Mammary epithelial cell (primary cell): ENCODE measurements at regions of chr22 and their contacts with region 1.

Region 1: DNA sequence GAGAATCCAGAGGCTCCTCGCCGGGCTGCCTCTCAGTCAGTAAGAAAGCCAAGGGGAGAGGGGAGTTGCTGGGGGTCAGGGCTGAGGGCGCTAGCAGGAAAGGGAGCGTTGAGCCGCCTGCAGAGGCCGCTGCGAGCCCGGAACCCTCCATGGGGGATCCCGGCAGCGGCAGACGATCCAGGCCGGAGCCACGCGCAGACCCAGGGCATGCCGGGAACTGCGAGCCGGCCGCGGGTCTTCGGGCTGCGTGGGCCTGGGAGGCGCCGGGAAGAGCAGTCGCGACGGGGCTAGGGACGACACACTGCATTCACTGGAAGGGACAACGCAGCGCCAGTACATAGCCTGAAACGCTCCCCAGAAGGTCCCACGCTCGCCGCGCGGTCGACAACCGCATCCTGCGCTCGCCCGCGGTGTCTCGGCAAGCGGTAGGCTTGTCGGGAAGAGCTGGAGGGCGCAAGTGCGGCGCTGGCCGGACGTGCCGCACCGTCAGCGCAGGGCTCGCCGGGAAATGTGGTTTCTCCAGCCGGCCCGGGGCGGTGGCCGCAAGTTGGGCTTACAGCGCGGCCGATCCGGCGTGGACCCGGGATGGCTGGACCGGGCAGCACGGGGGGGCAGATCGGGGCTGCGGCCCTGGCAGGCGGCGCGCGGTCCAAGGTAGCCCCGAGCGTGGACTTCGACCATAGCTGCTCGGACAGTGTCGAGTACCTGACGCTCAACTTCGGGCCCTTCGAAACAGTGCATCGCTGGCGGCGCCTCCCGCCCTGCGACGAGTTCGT is at the start of gene LZTR1:
- DNase-seq: peak; percentile 83
- H3K4me3 ChIP-seq: peak within 1 kb of the TSS; percentile 63 to 94 (median 83)
- H3K27ac ChIP-seq: peak within 1 kb of the TSS; percentile 78
- H3K4me1 ChIP-seq: peaks cover 33% of the 10 kb centered on the region
- H3K27me3 ChIP-seq: no peaks in the 10 kb centered on the region
- CTCF ChIP-seq: peak; percentile 32 to 59
- total RNA-seq, gene LZTR1: 52.8 to 59.4 TPM

Region 2: GRCh38 chr22:20495861-20496681 is 485.9 kb before region 1 on chr22:
- CTCF ChIA-PET with region 1: no interaction called
- dilution Hi-C with region 1: no loop called
- in situ Hi-C with region 1: no loop called
- intact Hi-C with region 1: no loop called
- DNase-seq: peak; percentile 92
- H3K4me3 ChIP-seq: peak overlapping the region; percentile 49 to 60 (median 54)
- H3K27ac ChIP-seq: peak overlapping the region; percentile 77
- H3K4me1 ChIP-seq: peaks cover 16% of the 10 kb centered on the region
- H3K27me3 ChIP-seq: no peaks in the 10 kb centered on the region
- CTCF ChIP-seq: peak; percentile 81 to 86

Region 3: GRCh38 chr22:20803696-20804324 is 178.2 kb before region 1 on chr22:
- CTCF ChIA-PET with region 1: no interaction called
- dilution Hi-C with region 1: no loop called
- in situ Hi-C with region 1: no loop called
- intact Hi-C with region 1: loop called (anchors 1 kb)
- DNase-seq: no peak
- H3K4me3 ChIP-seq: no peak overlapping the region
- H3K27ac ChIP-seq: no peak overlapping the region
- H3K4me1 ChIP-seq: no peaks in the 10 kb centered on the region
- H3K27me3 ChIP-seq: no peaks in the 10 kb centered on the region
- CTCF ChIP-seq: peak; percentile 47 to 60

Region 4: DNA sequence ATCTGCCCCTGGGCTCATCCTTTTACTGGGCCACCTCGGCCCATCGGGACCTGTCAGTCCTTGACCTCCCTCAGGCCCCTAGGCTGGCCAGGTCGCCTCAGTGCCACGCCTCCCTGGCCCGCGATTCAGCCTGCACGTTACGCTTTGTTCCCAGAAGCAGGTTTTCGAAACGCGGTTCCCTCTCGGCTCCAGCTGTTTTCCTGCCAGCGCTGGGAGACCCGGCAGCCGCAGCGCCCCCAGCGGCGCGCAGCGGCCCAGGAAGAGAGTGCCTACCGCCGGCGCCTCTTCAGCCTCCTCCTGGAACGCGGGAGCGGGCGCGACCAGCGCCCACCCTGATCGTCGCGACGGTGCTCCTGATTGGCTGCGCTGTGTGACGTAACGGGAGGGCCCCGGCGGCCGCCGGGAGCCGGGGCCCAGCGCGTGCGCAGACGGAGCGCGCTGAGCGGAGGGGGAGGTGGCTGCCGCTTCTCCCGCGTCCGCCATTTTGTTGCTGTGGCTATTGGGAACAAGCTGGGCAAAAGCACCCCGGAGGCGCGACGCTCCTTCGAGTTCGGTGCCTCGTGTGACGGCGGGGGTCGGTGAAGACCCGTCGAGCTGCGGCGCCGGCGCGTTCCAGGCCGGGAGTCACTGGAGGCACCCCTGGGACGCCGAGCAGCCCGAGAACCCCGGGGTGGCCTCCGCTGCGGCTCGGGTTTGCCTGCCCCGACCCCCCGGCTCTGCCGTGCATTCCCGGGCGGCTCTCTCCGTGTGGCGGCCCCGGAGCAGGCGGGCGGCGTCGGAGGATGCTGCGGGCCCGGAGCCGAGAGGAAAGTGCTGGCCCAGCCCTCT is 64.8 kb before region 1 on chr22 and contains the start of gene CRKL:
- CTCF ChIA-PET with region 1: no interaction called
- dilution Hi-C with region 1: no loop called
- in situ Hi-C with region 1: no loop called
- intact Hi-C with region 1: loop called (anchors 1 kb)
- DNase-seq: peak; percentile 98
- H3K4me3 ChIP-seq: peak within 1 kb of the TSS; percentile 90 to 98 (median 92)
- H3K27ac ChIP-seq: peak within 1 kb of the TSS; percentile 82
- H3K4me1 ChIP-seq: peaks cover 19% of the 10 kb centered on the region
- H3K27me3 ChIP-seq: no peaks in the 10 kb centered on the region
- CTCF ChIP-seq: peak; percentile 78 to 95
- total RNA-seq, gene CRKL: 75.0 to 80.3 TPM

Region 5: DNA sequence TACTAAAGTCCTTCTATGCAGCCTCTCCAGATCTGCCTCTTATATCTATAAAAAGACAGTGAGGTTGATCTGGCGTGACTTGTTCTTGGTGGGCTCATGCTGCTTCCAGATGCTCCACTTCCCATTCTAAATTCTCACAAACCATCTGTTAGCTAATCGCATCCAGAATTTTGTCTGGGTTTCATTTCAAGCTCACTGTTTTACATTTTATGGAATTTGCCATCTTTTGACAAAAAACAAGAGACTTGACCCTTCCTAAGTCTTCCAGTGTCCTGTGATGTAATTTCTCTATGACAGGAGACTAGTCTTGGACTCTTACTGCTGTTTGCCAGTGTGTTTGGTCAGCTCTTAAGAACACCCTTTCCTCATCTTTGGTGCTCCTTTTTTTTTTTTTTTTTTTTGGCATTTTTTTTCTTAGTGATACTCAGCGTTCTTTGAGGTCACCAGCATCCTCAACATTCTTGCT is 41.8 kb before region 1 on chr22:
- CTCF ChIA-PET with region 1: no interaction called
- dilution Hi-C with region 1: no loop called
- in situ Hi-C with region 1: no loop called
- intact Hi-C with region 1: no loop called
- DNase-seq: no peak
- H3K4me3 ChIP-seq: no peak overlapping the region
- H3K27ac ChIP-seq: no peak overlapping the region
- H3K4me1 ChIP-seq: peaks cover 16% of the 10 kb centered on the region
- H3K27me3 ChIP-seq: no peaks in the 10 kb centered on the region
- CTCF ChIP-seq: no peak

Region 6: DNA sequence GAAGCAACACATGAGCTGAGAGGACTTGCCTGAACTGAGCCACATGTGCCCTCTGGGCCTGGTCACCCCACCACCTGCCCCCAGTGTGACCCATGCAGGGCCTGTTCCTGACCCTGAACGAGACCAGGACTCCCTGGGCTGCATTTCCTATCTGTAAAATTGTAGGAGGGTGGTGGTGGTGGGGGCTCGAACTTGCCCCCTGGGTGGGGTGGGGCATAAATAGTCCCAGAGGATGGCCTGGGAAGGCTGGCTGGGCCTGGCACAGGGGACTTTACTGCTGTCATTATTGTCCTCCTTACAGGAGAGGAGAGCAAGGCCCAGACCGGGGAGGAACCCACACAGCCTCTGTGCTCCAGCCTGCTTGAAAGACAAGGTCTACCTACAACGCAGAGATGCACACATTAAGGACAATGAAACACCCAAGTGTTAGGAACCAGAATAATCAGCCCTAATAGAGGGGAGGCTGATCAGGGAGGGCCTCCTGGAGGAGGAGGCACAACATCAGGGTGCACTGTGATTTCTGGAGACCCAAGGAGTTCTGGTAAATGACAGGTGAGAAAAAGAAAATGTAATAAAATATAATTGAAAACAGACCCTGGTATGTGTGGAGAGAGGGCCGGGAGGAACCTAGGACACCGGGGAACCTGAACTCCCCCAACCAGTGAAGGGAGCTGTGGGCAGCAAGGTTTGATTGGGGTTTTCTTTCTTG is 17.7 kb before region 1 on chr22:
- CTCF ChIA-PET with region 1: no interaction called
- dilution Hi-C with region 1: no loop called
- in situ Hi-C with region 1: no loop called
- intact Hi-C with region 1: loop called (anchors 2 kb)
- DNase-seq: no peak
- H3K4me3 ChIP-seq: no peak overlapping the region
- H3K27ac ChIP-seq: no peak overlapping the region
- H3K4me1 ChIP-seq: peaks cover 2% of the 10 kb centered on the region
- H3K27me3 ChIP-seq: peaks cover 2% of the 10 kb centered on the region
- CTCF ChIP-seq: no peak

Region 7: GRCh38 chr22:21014202-21014725 is 32.3 kb after region 1 on chr22:
- CTCF ChIA-PET with region 1: no interaction called
- dilution Hi-C with region 1: no loop called
- in situ Hi-C with region 1: no loop called
- intact Hi-C with region 1: no loop called
- DNase-seq: peak; percentile 78
- H3K4me3 ChIP-seq: peak overlapping the region; percentile 51 to 64 (median 63)
- H3K27ac ChIP-seq: peak overlapping the region; percentile 55
- H3K4me1 ChIP-seq: peaks cover 20% of the 10 kb centered on the region
- H3K27me3 ChIP-seq: no peaks in the 10 kb centered on the region
- CTCF ChIP-seq: no peak